Mammary epithelial cell (primary cell): ENCODE measurements at regions of chr1 and their contacts with region 1.

Region 1: DNA sequence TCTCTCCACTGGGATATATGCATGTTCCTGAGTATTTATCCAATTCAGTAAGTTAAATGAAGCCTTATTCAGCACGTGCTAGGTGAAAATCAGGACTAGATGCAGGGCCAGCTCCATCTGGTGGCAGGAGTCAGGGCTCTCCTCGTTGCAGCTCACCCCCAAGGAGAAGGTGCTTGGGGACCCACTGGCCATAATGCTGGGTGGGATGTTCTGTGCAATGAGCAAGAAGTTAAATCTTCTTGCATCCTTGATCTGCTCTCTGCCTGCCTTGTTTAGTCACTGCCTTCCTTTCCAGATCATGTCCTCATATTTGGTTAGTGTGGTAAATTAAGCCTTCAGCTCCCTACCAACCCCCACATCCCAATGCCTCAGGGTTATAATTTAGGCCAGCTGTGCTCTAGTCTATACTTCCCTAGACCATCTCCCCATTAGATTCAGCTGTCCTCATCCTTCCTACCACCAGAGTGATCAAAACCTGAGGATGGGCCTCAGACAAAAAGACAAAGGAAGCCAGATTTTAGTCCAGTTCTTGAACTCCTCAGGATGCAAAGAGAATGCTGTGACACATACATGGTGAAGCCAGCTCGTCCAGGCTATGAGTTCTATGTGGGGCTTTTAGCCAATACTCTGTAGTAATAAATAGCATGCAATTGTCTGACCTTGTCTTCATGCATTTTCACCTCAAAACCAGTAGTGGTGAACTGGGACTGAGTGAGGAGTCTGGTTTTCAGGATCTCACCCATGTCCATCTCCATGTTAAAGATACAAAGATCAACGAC is 55.9 kb downstream of the SEC16B start:
- DNase-seq: peak; percentile 32
- H3K4me3 ChIP-seq: no peak overlapping the region
- H3K27ac ChIP-seq: no peak overlapping the region
- H3K4me1 ChIP-seq: peaks cover 31% of the 10 kb centered on the region
- H3K27me3 ChIP-seq: no peaks in the 10 kb centered on the region
- CTCF ChIP-seq: peak; percentile 68 to 79

Region 2: DNA sequence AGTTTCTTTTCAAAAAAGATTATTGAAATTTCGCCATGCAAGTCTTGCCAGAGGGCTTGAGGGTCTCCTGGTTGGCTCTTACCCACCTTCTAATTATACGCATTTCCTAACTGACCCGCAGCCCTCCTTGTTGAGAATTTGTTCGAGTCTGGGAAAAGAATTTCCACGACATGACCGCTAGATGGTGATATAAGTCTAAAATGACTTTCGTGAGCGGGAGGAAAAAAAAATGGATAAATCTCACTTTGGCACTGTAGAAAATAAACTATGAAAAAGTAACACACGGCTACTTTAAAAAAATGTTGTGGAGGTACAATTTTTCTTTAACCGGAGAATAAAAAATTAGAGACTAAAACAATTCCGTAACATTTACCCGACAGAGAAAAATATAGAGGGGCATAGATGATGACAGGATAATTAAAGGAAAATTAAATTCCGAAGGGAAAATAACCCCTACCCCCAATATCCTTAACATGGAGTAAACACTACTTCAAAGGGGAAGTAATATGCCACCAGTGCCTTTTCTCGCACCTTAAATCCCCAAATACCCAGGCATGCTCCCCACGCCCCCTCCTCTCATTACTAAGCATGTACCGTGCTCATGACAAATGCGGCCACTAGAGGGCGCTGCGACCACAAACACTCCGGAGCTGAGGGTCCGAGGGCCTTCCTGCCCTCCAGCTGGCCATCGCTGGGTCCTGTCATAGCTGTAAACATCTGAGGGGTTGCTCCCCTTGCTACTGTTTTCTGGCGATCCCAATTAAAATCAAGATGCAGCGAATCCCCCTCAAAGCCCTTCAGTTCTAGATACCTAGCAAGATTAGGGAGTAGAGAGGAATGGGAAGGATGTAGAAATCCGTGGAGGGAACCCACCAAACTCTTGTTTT is 1016.4 kb before region 1 on chr1:
- CTCF ChIA-PET with region 1: no interaction called
- dilution Hi-C with region 1: loop called (anchors 25 kb)
- in situ Hi-C with region 1: no loop called
- intact Hi-C with region 1: loop called (anchors 1 kb)
- DNase-seq: peak; percentile 37
- H3K4me3 ChIP-seq: peak overlapping the region; percentile 11 to 26 (median 21)
- H3K27ac ChIP-seq: no peak overlapping the region
- H3K4me1 ChIP-seq: peaks cover 6% of the 10 kb centered on the region
- H3K27me3 ChIP-seq: no peaks in the 10 kb centered on the region
- CTCF ChIP-seq: peak; percentile 76 to 90

Region 3: DNA sequence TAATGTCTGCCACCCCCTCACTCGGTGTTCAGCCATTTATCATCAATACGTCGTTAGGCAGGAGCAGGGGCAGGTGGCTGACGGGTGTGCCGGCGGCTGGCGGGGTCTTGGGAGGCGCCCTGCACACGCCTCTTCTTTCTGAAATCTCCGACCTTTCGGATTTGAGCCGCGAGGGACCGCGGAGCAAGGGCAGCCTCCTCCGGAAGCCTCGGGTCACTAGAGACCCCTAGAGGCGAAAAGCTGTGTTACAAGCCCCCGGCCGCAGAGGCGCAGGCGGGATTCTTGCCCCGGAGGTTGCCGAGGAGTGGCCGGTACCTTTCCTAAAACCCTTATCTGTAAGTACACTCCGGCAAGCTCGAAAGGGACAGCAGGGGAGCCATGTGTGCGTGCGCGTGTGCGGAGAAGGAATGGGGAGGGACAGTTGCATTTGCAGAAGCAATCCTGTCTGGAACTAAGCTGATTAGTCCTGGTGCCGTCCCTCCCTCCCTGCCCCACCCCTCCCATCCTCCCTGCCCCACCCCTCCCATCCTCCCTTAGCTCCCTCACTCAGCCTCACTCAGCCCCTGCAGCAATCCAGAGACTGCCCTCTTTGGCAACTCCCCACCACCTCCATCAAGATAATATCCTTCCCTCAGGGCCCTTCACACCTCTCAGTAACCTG is 732.2 kb before region 1 on chr1:
- CTCF ChIA-PET with region 1: no interaction called
- dilution Hi-C with region 1: no loop called
- in situ Hi-C with region 1: loop called in 1 of 2 experiments (anchors 25 kb)
- intact Hi-C with region 1: no loop called
- DNase-seq: peak; percentile 34
- H3K4me3 ChIP-seq: peak overlapping the region in 2 of 3 experiments; percentile 23 to 31
- H3K27ac ChIP-seq: no peak overlapping the region
- H3K4me1 ChIP-seq: peaks cover 5% of the 10 kb centered on the region
- H3K27me3 ChIP-seq: peaks cover 11% of the 10 kb centered on the region
- CTCF ChIP-seq: peak; percentile 64 to 89

Region 4: DNA sequence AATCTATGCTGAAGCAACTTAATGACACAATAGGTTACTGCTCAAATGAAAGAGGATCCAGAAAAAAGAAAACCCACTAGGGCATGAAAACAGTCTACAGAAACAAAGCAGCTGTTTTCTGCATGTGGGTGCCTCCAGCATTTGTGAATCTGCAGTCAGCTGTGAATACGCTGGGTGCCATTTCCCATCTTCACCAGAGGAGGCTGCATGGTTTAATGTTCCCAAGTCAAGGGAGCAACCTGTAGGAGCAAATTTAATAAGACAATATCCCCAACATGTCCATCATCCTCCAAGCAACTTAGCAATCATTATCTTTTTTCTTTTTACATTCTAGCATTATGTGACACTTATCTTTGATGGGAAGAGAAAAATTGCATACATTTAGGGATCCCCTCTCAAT is 346.5 kb before region 1 on chr1:
- CTCF ChIA-PET with region 1: no interaction called
- dilution Hi-C with region 1: no loop called
- in situ Hi-C with region 1: no loop called
- intact Hi-C with region 1: loop called (anchors 5 kb)
- DNase-seq: peak; percentile 23
- H3K4me3 ChIP-seq: no peak overlapping the region
- H3K27ac ChIP-seq: no peak overlapping the region
- H3K4me1 ChIP-seq: no peaks in the 10 kb centered on the region
- H3K27me3 ChIP-seq: no peaks in the 10 kb centered on the region
- CTCF ChIP-seq: peak; percentile 55 to 73

Region 5: GRCh38 chr1:177650947-177651346 is 263.0 kb before region 1 on chr1:
- CTCF ChIA-PET with region 1: no interaction called
- dilution Hi-C with region 1: no loop called
- in situ Hi-C with region 1: no loop called
- intact Hi-C with region 1: no loop called
- DNase-seq: no peak
- H3K4me3 ChIP-seq: no peak overlapping the region
- H3K27ac ChIP-seq: no peak overlapping the region
- H3K4me1 ChIP-seq: no peaks in the 10 kb centered on the region
- H3K27me3 ChIP-seq: no peaks in the 10 kb centered on the region
- CTCF ChIP-seq: no peak

Region 6: DNA sequence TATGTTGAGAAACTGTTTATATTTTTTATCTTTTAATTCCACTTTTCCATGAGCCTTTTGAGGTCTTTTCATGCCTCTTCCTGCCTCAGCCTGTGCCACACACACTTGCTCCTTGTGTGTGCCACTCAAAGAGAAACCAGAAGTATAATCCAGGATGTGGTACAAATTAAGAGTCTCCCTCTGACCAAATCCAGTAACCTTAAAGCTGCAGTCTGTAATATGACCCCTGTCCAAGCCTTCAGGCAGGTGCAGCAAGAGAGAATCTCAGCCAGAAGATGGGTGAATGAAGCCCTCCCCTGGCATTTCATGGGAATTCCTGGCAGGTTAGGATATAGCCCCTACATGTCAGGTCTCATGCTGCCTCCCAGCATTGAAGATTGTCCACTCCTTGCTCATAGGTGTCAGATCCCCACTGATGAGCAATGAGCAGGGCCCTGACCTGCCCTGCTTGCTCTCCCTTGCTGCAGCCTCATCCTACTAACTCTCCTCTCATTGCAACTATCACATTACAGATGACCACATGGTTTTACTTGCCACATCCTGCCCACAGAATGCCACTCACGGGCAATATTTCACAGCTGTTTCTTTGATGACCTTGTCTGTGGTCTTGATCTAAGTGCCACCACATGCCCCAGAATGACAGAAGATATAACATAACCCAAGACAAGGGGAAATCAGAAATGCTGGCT is 113.4 kb before region 1 on chr1:
- CTCF ChIA-PET with region 1: no interaction called
- dilution Hi-C with region 1: no loop called
- in situ Hi-C with region 1: no loop called
- intact Hi-C with region 1: loop called (anchors 2 kb)
- DNase-seq: peak; percentile 86
- H3K4me3 ChIP-seq: no peak overlapping the region
- H3K27ac ChIP-seq: no peak overlapping the region
- H3K4me1 ChIP-seq: peaks cover 22% of the 10 kb centered on the region
- H3K27me3 ChIP-seq: no peaks in the 10 kb centered on the region
- CTCF ChIP-seq: no peak

Region 7: GRCh38 chr1:178031856-178032320 is 117.9 kb after region 1 on chr1:
- CTCF ChIA-PET with region 1: no interaction called
- dilution Hi-C with region 1: no loop called
- in situ Hi-C with region 1: no loop called
- intact Hi-C with region 1: no loop called
- DNase-seq: peak; percentile 71
- H3K4me3 ChIP-seq: no peak overlapping the region
- H3K27ac ChIP-seq: no peak overlapping the region
- H3K4me1 ChIP-seq: peaks cover under 1% of the 10 kb centered on the region
- H3K27me3 ChIP-seq: no peaks in the 10 kb centered on the region
- CTCF ChIP-seq: peak; percentile 89 to 91